ENCODE measurements at regions of chr5 and their contacts with region 1.

Region 1: GRCh38 chr5:9534881-9535517 is 10.9 kb downstream of the SEMA5A start:
- DNase-seq: peak in 2 of 5 donors; percentile 37 to 38
- ATAC-seq: peak in 3 of 4 donors; percentile 47 to 56 (median 51)
- H3K4me3 ChIP-seq: no peak overlapping the region
- H3K27ac ChIP-seq: peak overlapping the region in 10 of 12 donors; percentile 3 to 73 (median 50)
- H3K4me1 ChIP-seq: peaks cover 0 to 73% (median 21%) of the 10 kb centered on the region in 12 donors
- H3K27me3 ChIP-seq: no peaks in the 10 kb centered on the region
- CTCF ChIP-seq: no peak
- POLR2A ChIP-seq: no peak

Region 2: GRCh38 chr5:9173281-9174048 is 361.5 kb before region 1 on chr5:
- intact Hi-C with region 1: no loop called
- DNase-seq: no peak
- ATAC-seq: peak in 1 of 4 donors; percentile 45
- H3K4me3 ChIP-seq: no peak overlapping the region
- H3K27ac ChIP-seq: peak overlapping the region in 1 of 12 donors; percentile 52
- H3K4me1 ChIP-seq: peaks cover 0 to 9% (median 0%) of the 10 kb centered on the region in 12 donors
- H3K27me3 ChIP-seq: no peaks in the 10 kb centered on the region
- CTCF ChIP-seq: no peak
- POLR2A ChIP-seq: no peak

Region 3: DNA sequence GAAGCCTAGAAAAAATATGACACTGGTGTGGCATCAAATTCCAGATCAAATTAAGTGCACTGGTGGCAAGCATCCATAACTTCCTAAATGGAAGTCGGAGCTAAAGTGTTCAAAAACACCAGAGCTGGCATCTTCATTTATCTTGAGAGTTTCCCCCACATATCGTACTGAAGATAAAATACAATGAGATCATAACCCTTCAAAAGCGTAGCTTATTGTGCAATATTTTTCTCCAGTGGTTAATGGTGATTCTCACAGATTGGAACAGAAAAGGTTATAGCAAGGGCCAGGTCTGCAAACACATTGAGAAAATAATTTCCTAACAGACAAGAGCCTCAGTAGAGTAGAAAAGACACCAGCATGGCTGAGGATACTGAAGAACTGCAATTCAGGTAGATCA is 136.8 kb before region 1 on chr5:
- intact Hi-C with region 1: loop called in 1 of 10 experiments (anchors 10 kb)
- DNase-seq: no peak
- ATAC-seq: peak in 1 of 4 donors; percentile 21
- H3K4me3 ChIP-seq: no peak overlapping the region
- H3K27ac ChIP-seq: no peak overlapping the region
- H3K4me1 ChIP-seq: peaks cover 0 to 12% (median 4%) of the 10 kb centered on the region in 12 donors
- H3K27me3 ChIP-seq: no peaks in the 10 kb centered on the region
- CTCF ChIP-seq: no peak
- POLR2A ChIP-seq: no peak

Region 4: GRCh38 chr5:9454012-9454481 is 81.0 kb before region 1 on chr5:
- intact Hi-C with region 1: loop called in 2 of 10 experiments (anchors 5 kb)
- DNase-seq: no peak
- ATAC-seq: peak in 1 of 4 donors; percentile 23
- H3K4me3 ChIP-seq: no peak overlapping the region
- H3K27ac ChIP-seq: no peak overlapping the region
- H3K4me1 ChIP-seq: peaks cover 0 to 29% (median 11%) of the 10 kb centered on the region in 12 donors
- H3K27me3 ChIP-seq: no peaks in the 10 kb centered on the region
- CTCF ChIP-seq: no peak
- POLR2A ChIP-seq: no peak

Measured in heart left ventricle (tissue), 16 donors.